ENCODE measurements at regions of chr16 and their contacts with region 1.

Region 1: DNA sequence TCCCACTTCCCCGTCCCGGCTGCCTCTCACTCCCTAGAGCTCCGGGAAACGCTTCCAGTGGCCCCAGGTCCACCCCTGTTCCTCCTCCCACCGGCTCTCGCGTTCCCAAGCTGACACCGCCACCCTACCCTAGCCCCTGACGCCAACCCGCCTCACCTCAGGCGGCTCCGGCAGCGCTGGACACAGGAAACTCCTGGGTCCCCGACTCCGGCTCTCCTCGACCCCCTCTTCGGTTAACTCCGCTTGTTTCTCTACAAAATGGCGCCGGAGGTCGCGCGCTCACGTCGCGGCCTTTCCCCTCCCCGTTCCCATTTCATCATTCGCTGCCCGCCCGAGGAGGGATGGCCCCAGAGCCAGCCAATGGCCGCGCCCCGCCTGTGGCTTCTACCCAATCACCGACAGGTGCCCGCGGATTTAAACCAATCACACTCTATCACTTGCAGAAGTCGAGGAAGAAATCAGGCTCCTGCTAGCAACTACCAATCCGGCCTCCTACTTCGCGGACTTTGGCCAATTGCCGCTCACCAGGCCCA is at the start of gene CNOT1:
- DNase-seq: peak; percentile 95
- ATAC-seq: peak; percentile 88
- H3K4me3 ChIP-seq: peak within 1 kb of the TSS; percentile 91
- H3K27ac ChIP-seq: peak within 1 kb of the TSS; percentile 72
- H3K4me1 ChIP-seq: no peaks in the 10 kb centered on the region; the same call in 1 of the 2 replicates
- H3K27me3 ChIP-seq: no peaks in the 10 kb centered on the region
- CTCF ChIP-seq: no peak
- total RNA-seq, gene CNOT1: 132 and 135 TPM in 2 replicates

Region 2: GRCh38 chr16:58336332-58337089 is 293.1 kb before region 1 on chr16:
- CTCF ChIA-PET with region 1: no interaction called
- POLR2A ChIA-PET with region 1: no interaction called
- intact Hi-C with region 1: loop called (anchors 10 kb)
- DNase-seq: peak; percentile 87
- ATAC-seq: peak; percentile 90
- H3K4me3 ChIP-seq: peak overlapping the region; percentile 61
- H3K27ac ChIP-seq: no peak overlapping the region
- H3K4me1 ChIP-seq: peaks cover 5% of the 10 kb centered on the region
- H3K27me3 ChIP-seq: no peaks in the 10 kb centered on the region
- CTCF ChIP-seq: peak; percentile 85

Region 3: GRCh38 chr16:58515125-58515870 is 114.3 kb before region 1 on chr16 and contains the start of gene SETD6:
- CTCF ChIA-PET with region 1: no interaction called
- POLR2A ChIA-PET with region 1: no interaction called
- intact Hi-C with region 1: loop called (anchors 10 kb)
- DNase-seq: peak; percentile 80
- ATAC-seq: peak; percentile 85
- H3K4me3 ChIP-seq: peak within 1 kb of the TSS; percentile 74
- H3K27ac ChIP-seq: peak within 1 kb of the TSS; percentile 36
- H3K4me1 ChIP-seq: peaks cover 8% of the 10 kb centered on the region
- H3K27me3 ChIP-seq: no peaks in the 10 kb centered on the region
- CTCF ChIP-seq: no peak
- total RNA-seq, gene SETD6: 22.0 and 22.5 TPM in 2 replicates

Region 4: GRCh38 chr16:58948244-58948643 is 318.6 kb after region 1 on chr16:
- CTCF ChIA-PET with region 1: no interaction called
- POLR2A ChIA-PET with region 1: no interaction called
- intact Hi-C with region 1: no loop called
- DNase-seq: no peak
- ATAC-seq: no peak
- H3K4me3 ChIP-seq: no peak overlapping the region
- H3K27ac ChIP-seq: no peak overlapping the region
- H3K4me1 ChIP-seq: no peaks in the 10 kb centered on the region
- H3K27me3 ChIP-seq: 0 out of 2 replicates have a peak, but pooled peaks cover 4% of the 10 kb centered on the region
- CTCF ChIP-seq: no peak